Activated CD8-positive, alpha-beta memory T cell treated with anti-CD3 and anti-CD28 coated beads, Interleukin-2, amount 10 ng/mL, durations not matched to agents 7 days and 5 days (primary cell): ENCODE measurements at regions of chr15 and their contacts with region 1.

Region 1: GRCh38 chr15:79582650-79583049 is 150.5 kb downstream of the MINAR1 start:
- DNase-seq: no peak
- ATAC-seq: no peak
- H3K4me3 Mint-ChIP-seq: no peak overlapping the region
- H3K27ac Mint-ChIP-seq: no peak overlapping the region
- H3K4me1 Mint-ChIP-seq: no peaks in the 10 kb centered on the region
- H3K27me3 Mint-ChIP-seq: peaks cover 51% of the 10 kb centered on the region

Region 2: GRCh38 chr15:79596051-79596507 is 13.4 kb after region 1 on chr15:
- CTCF ChIA-PET with region 1: interaction called, 15 read pairs
- DNase-seq: peak; percentile 69
- ATAC-seq: peak; percentile 93
- H3K4me3 Mint-ChIP-seq: no peak overlapping the region
- H3K27ac Mint-ChIP-seq: no peak overlapping the region
- H3K4me1 Mint-ChIP-seq: no peaks in the 10 kb centered on the region
- H3K27me3 Mint-ChIP-seq: peaks cover 28% of the 10 kb centered on the region